CD4-positive, alpha-beta T cell (primary cell): ENCODE measurements at regions of chr2 and their contacts with region 1.

Region 1: DNA sequence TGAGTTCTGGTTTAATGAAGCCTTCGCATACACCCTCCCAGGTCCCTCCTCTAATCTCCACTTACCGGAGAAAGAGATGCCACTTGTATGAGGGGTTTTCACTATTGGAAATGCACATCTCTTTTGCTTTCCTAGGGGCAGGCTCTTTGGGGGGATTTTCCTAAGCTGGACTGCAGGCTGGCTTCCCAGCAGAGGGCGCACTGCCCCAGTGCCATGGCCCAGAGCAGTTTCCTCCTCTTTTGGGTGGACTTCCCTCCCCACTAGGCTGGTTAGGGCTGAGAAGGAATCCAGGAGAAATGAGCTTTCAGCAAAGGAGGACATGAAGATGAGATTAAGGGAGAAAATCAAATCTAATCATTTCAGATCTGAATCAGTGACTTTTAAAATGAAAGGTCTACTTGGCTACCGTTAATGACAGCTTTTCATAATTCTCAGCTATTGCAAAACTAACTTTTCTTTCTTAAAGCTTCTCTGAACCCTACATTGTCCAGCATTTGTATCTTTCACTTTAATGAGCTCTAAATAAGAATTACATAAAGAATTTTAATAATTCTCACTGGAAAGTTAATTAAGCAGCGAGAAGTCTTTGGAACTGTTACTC is 784.1 kb upstream of the FANCL start:
- DNase-seq: peak in 4 of 14 experiments; percentile 3 to 43 (median 24)
- ATAC-seq: no peak
- H3K4me3 ChIP-seq: no peak overlapping the region
- H3K4me3 Mint-ChIP-seq: no peak overlapping the region
- H3K27ac ChIP-seq: no peak overlapping the region
- H3K27ac Mint-ChIP-seq: no peak overlapping the region
- H3K4me1 ChIP-seq: no peaks in the 10 kb centered on the region
- H3K4me1 Mint-ChIP-seq: no peaks in the 10 kb centered on the region
- H3K27me3 ChIP-seq: no peaks in the 10 kb centered on the region
- H3K27me3 Mint-ChIP-seq: no peaks in the 10 kb centered on the region
- CTCF ChIP-seq: no peak

Region 2: GRCh38 chr2:58436872-58437271 is 588.4 kb before region 1 on chr2:
- CTCF ChIA-PET with region 1: no interaction called
- POLR2A ChIA-PET with region 1: no interaction called
- intact Hi-C with region 1: no loop called
- DNase-seq: no peak
- ATAC-seq: no peak
- H3K4me3 ChIP-seq: no peak overlapping the region
- H3K4me3 Mint-ChIP-seq: no peak overlapping the region
- H3K27ac ChIP-seq: no peak overlapping the region
- H3K27ac Mint-ChIP-seq: no peak overlapping the region
- H3K4me1 ChIP-seq: no peaks in the 10 kb centered on the region
- H3K4me1 Mint-ChIP-seq: no peaks in the 10 kb centered on the region
- H3K27me3 ChIP-seq: no peaks in the 10 kb centered on the region
- H3K27me3 Mint-ChIP-seq: no peaks in the 10 kb centered on the region
- CTCF ChIP-seq: no peak

Region 3: GRCh38 chr2:58535182-58535581 is 490.1 kb before region 1 on chr2:
- CTCF ChIA-PET with region 1: no interaction called
- POLR2A ChIA-PET with region 1: no interaction called
- intact Hi-C with region 1: no loop called
- DNase-seq: no peak
- ATAC-seq: no peak
- H3K4me3 ChIP-seq: no peak overlapping the region
- H3K4me3 Mint-ChIP-seq: no peak overlapping the region
- H3K27ac ChIP-seq: no peak overlapping the region
- H3K27ac Mint-ChIP-seq: no peak overlapping the region
- H3K4me1 ChIP-seq: no peaks in the 10 kb centered on the region
- H3K4me1 Mint-ChIP-seq: no peaks in the 10 kb centered on the region
- H3K27me3 ChIP-seq: no peaks in the 10 kb centered on the region
- H3K27me3 Mint-ChIP-seq: no peaks in the 10 kb centered on the region
- CTCF ChIP-seq: no peak

Region 4: DNA sequence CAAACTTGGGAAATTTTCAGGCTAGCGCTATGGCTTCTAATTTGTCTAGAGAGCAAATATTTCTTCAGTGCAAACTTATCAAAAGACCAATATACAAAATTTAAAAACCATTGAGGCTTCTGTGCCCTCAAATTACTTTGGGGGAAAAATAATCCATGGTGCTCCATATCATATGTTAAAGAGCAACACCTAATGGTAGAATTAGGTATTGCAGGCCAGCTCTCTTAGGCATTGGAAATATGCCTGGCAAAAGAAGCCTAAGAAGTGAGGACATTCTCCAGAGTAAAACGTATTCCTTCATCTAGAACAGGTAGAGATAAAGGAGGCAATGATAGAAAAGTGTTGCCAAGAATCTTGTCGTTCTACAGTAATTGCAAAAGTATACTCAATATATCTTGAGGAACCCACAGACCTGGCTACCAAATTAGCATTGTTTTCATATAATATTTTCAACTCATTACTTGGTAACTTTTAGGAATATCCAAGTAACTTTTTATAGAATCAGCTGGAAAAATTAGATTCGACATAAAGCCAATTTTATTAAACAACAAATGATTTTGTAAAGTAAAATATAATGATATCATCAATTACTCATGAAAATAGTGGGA is 1127.1 kb after region 1 on chr2:
- CTCF ChIA-PET with region 1: no interaction called
- POLR2A ChIA-PET with region 1: no interaction called
- intact Hi-C with region 1: loop called in 1 of 2 experiments (anchors 10 kb)
- DNase-seq: peak in 3 of 14 experiments; percentile 16 to 52 (median 28)
- ATAC-seq: no peak
- H3K4me3 ChIP-seq: no peak overlapping the region
- H3K4me3 Mint-ChIP-seq: no peak overlapping the region
- H3K27ac ChIP-seq: no peak overlapping the region
- H3K27ac Mint-ChIP-seq: no peak overlapping the region
- H3K4me1 ChIP-seq: no peaks in the 10 kb centered on the region
- H3K4me1 Mint-ChIP-seq: peaks cover 5% of the 10 kb centered on the region
- H3K27me3 ChIP-seq: no peaks in the 10 kb centered on the region
- H3K27me3 Mint-ChIP-seq: no peaks in the 10 kb centered on the region
- CTCF ChIP-seq: peak; percentile 65

Region 5: GRCh38 chr2:60581433-60582282 is 1556.4 kb after region 1 on chr2:
- CTCF ChIA-PET with region 1: no interaction called
- POLR2A ChIA-PET with region 1: no interaction called
- intact Hi-C with region 1: loop called in 1 of 2 experiments (anchors 10 kb)
- DNase-seq: peak; percentile 19 to 80 (median 46)
- ATAC-seq: peak; percentile 92
- H3K4me3 ChIP-seq: no peak overlapping the region
- H3K4me3 Mint-ChIP-seq: no peak overlapping the region
- H3K27ac ChIP-seq: no peak overlapping the region
- H3K27ac Mint-ChIP-seq: no peak overlapping the region
- H3K4me1 ChIP-seq: peaks cover 9% of the 10 kb centered on the region
- H3K4me1 Mint-ChIP-seq: no peaks in the 10 kb centered on the region
- H3K27me3 ChIP-seq: peaks cover 22 to 27% of the 10 kb centered on the region in 2 experiments
- H3K27me3 Mint-ChIP-seq: peaks cover 50% of the 10 kb centered on the region
- CTCF ChIP-seq: peak; percentile 83